Vagina (tissue), 2 donors: ENCODE measurements at regions of chr4 and their contacts with region 1.

Region 1: GRCh38 chr4:183602557-183603027 is 56.4 kb downstream of the RWDD4 start:
- DNase-seq: peak in 1 of 2 donors; percentile 65
- H3K4me3 ChIP-seq: no peak overlapping the region
- H3K27ac ChIP-seq: no peak overlapping the region
- H3K4me1 ChIP-seq: no peaks in the 10 kb centered on the region
- H3K27me3 ChIP-seq: no peaks in the 10 kb centered on the region
- CTCF ChIP-seq: peak in 1 of 3 experiments; percentile 32
- POLR2A ChIP-seq: no peak

Region 2: GRCh38 chr4:183471946-183472708 is 130.5 kb before region 1 on chr4:
- intact Hi-C with region 1: loop called (anchors 5 kb)
- DNase-seq: no peak
- H3K4me3 ChIP-seq: no peak overlapping the region
- H3K27ac ChIP-seq: no peak overlapping the region
- H3K4me1 ChIP-seq: no peaks in the 10 kb centered on the region
- H3K27me3 ChIP-seq: no peaks in the 10 kb centered on the region
- CTCF ChIP-seq: peak; percentile 78 to 86 (median 81)
- POLR2A ChIP-seq: no peak

Region 3: DNA sequence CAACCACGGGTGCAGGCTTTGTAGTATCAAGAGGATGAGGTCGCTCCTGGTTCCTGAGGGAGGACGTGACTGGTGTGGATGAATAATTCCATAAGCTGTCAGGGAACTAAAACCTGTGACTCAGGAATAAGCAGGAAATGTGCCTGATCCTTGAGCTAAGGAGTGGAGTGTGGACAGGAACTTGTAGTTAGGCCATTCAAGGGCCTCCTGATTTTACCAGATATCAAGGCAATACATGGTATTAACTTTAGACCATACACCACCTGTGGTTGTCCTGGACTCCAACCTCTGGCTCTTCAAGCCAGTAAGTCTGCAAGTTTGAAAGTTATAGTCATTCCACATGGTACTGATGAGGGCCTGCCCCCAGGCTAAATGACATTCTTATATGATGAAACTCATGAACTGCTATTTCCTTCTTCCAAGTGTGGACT is 109.8 kb before region 1 on chr4:
- intact Hi-C with region 1: no loop called
- DNase-seq: no peak
- H3K4me3 ChIP-seq: no peak overlapping the region
- H3K27ac ChIP-seq: no peak overlapping the region
- H3K4me1 ChIP-seq: no peaks in the 10 kb centered on the region
- H3K27me3 ChIP-seq: no peaks in the 10 kb centered on the region
- CTCF ChIP-seq: no peak
- POLR2A ChIP-seq: no peak